Activated naive CD8-positive, alpha-beta T cell treated with anti-CD3 and anti-CD28 coated beads, Interleukin-2, amount 10 ng/mL, durations not matched to agents 7 days and 5 days (primary cell): ENCODE measurements at regions of chr10 and their contacts with region 1.

Region 1: GRCh38 chr10:62183442-62183841 is 85.2 kb downstream of the RTKN2 start:
- DNase-seq: no peak
- ATAC-seq: peak; percentile 87
- H3K4me3 Mint-ChIP-seq: peak overlapping the region; percentile 62
- H3K27ac Mint-ChIP-seq: peak overlapping the region; percentile 91
- H3K4me1 Mint-ChIP-seq: peaks cover 67% of the 10 kb centered on the region
- H3K27me3 Mint-ChIP-seq: no peaks in the 10 kb centered on the region

Region 2: DNA sequence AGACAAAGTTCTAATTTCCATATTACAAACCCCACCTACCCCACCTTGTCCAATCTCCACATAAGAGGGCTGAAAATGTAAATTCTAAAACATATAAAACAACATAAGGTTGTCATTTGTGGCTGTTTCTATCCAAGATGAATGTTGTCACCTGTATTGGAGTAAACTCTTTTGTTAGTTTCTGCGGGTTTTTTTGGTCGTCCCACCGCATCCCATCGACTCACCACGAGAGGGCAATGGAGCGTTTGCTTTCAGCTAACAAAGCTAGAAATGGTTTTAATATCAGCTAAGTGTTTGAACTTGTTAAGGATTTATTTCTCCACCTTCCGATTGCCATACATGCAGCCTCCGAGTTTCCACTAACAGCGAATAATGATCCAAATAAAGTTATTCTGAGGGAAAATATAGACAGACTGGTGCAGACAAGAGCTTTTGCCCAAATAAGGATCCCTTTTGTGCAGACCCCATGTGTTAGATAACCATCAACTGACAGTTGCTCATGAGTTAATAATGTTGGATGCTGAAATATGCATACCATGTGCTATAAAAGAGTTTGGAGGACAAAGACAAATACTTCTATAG is 144.7 kb before region 1 on chr10:
- POLR2A ChIA-PET with region 1: interaction called, 16 read pairs
- DNase-seq: peak; percentile 67
- ATAC-seq: peak; percentile 67
- H3K4me3 Mint-ChIP-seq: peak overlapping the region; percentile 36
- H3K27ac Mint-ChIP-seq: peak overlapping the region; percentile 80
- H3K4me1 Mint-ChIP-seq: peaks cover 53% of the 10 kb centered on the region
- H3K27me3 Mint-ChIP-seq: no peaks in the 10 kb centered on the region

Region 3: GRCh38 chr10:62063795-62064472 is 119.5 kb before region 1 on chr10:
- POLR2A ChIA-PET with region 1: interaction called, 10 read pairs
- DNase-seq: no peak
- ATAC-seq: peak; percentile 87
- H3K4me3 Mint-ChIP-seq: peak overlapping the region; percentile 72
- H3K27ac Mint-ChIP-seq: peak overlapping the region; percentile 89
- H3K4me1 Mint-ChIP-seq: peaks cover 51% of the 10 kb centered on the region
- H3K27me3 Mint-ChIP-seq: no peaks in the 10 kb centered on the region

Region 4: DNA sequence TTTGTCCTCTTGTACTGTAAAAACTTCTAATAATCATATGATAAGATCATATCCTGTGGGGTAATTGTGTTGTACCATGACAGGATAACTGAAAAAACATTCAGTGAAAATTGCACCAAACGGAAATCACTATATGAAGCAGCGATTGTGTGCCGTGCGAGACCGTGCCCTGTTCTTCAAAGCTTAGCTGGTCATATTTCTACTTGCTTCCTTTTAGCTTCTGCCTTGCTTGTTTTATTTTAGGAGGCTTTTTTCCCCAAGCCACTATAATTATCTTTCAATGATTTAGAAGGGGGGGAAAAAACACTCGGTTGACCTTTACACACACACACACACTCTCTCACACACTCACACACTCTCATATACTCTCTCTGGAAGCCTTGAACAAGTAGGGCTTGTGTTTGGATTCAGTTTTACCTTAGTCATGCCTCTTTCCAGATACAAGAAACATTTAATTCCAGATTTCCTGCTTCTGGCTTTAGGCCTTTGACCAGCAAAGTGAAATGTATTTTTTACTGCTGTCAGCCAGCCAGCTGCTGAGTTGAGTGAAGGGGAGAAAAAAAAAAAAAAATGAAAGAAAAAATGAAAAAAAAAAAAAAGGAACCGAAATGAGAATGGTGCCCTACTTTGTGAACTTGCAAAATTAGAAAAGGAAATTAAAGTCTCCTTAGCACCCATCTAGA is 100.6 kb before region 1 on chr10:
- POLR2A ChIA-PET with region 1: interaction called, 27 read pairs
- DNase-seq: no peak
- ATAC-seq: peak; percentile 93
- H3K4me3 Mint-ChIP-seq: peak overlapping the region; percentile 51
- H3K27ac Mint-ChIP-seq: peak overlapping the region; percentile 94
- H3K4me1 Mint-ChIP-seq: peaks cover 59% of the 10 kb centered on the region
- H3K27me3 Mint-ChIP-seq: no peaks in the 10 kb centered on the region

Region 5: DNA sequence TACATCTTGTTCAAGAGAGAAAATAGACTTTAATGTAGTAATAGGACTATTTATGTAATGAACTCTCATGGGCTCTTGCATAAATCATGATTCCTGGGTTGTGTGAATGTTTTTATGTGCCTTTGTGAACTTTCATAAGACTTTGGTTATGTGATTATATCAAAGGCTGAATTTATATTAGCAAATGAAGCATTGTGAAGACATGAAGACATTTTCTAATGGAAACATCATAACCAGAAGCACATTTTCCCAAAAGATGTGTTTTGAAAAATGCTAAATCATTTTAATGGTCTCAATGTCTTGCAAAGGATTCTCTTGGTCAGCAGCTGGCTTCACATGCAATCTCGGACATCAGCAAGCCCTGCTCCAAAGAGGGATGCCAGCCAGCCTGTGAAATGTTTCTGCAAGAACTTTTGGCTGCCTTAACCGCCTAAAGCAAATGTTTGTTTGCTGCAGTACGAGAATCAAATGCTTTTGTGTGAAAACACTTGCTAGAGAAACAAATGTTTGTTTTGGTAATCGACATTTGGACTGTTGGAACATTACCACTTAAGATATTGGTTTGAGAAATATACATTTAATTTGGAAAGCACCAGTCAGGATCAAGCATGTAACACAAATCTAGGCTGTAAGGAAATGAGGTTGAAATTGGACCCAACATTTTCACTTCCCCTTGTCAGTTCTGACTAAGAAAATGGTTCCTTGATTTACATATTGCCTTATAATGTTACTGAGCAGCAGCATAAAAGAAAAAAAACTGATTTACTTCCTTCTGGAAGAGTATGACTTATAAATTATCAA is 16.9 kb before region 1 on chr10:
- POLR2A ChIA-PET with region 1: no interaction called
- DNase-seq: no peak
- ATAC-seq: no peak
- H3K4me3 Mint-ChIP-seq: no peak overlapping the region
- H3K27ac Mint-ChIP-seq: no peak overlapping the region
- H3K4me1 Mint-ChIP-seq: peaks cover 7% of the 10 kb centered on the region
- H3K27me3 Mint-ChIP-seq: no peaks in the 10 kb centered on the region

Region 6: GRCh38 chr10:62244780-62245467 is 61.5 kb after region 1 on chr10:
- POLR2A ChIA-PET with region 1: interaction called, 16 read pairs
- DNase-seq: no peak
- ATAC-seq: peak; percentile 87
- H3K4me3 Mint-ChIP-seq: peak overlapping the region; percentile 59
- H3K27ac Mint-ChIP-seq: peak overlapping the region; percentile 65
- H3K4me1 Mint-ChIP-seq: peaks cover 31% of the 10 kb centered on the region
- H3K27me3 Mint-ChIP-seq: no peaks in the 10 kb centered on the region